GM18951 (cell line): ENCODE measurements at regions of chr3 and their contacts with region 1.

Region 1: GRCh38 chr3:53072653-53073552 is 27.0 kb upstream of the SFMBT1 start:
- POLR2A ChIP-seq: peak; percentile 38

Region 2: GRCh38 chr3:52171514-52172261 is 901.2 kb before region 1 on chr3:
- in situ Hi-C with region 1: no loop called
- POLR2A ChIP-seq: no peak

Region 3: DNA sequence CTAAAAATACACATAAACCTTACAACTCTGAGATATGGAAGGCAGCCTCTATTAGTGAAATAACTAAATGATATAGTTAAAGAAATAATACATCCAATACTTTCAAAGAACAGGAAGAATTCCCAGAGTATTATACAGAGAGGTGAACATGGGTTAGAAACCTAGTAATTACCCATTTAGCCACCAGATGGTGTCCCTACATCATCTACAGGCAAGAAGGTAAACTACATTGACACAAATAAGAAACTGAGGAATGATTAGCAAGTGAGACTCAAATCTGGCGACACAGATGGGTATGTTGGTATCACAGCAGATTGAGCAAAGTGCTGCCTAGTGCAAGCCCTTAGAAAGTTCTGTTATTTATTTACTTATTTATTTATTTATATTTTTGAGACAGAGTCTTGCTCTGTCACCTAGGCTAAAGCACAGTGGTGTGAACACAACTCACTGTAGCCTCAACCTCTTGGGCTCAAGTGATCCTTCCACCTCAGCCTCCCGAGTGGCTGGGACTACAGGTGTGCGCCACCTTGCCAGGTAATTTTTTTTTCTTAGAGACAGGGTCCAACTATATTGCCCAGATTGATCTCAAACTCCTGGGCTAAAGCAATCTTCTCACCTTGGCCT is 330.4 kb before region 1 on chr3:
- in situ Hi-C with region 1: loop called (anchors 25 kb)
- POLR2A ChIP-seq: no peak

Region 4: DNA sequence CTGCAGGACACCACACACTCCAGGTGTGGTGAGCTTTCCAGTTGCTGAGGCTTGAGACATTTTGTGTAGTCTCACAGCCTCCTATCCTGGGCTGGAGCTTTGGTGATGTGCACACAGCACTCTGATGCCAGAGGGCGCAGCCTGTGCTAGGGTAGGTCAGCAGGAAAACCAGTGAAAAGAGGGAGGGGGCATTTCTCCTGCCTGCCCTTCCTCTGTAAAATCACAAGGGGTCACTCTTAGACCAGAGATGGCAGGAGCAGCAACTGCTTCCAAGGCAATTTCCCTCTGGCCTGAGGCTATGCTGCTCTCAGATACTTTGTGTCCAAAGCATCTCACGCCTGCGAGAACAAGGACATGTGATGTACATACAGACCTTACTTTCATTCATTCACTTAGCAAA is 221.6 kb before region 1 on chr3:
- in situ Hi-C with region 1: loop called (anchors 5 kb)
- POLR2A ChIP-seq: no peak

Region 5: DNA sequence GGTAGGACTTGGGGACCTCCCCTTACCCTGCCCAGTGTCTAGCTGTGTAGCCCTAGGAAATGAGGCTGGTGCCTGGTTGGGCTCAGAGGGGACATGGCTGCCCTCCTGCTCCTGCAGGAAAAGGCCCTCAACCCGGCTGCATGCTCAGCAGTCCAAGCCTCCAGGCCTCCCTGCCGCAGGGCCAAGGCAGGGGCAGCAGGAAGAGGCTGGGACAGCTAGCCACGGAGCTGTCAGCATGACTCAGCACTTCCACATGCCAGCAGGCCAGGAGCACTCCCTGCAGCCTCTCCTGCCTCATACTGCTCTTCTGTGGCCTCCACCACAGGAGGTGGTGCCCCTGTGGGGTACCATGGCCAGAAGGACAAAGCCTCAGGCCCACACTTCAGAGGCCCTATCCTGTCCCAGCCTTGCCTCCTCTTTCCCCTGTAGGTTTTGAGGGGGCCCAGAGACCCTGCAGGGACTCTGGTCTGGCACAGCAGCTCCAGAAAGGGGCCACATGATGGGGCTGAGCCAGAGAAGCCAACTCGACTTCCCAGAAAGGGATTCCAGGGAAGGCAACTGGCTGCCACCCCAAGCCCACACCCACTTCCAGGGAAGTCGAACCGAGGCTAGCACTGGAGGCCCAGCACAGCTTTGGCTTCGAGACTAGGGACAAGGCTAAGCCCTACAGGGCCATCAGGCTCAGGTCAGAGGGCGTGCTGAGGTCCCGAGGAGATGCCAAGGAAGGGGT is 163.4 kb after region 1 on chr3:
- in situ Hi-C with region 1: no loop called
- POLR2A ChIP-seq: no peak

Region 6: DNA sequence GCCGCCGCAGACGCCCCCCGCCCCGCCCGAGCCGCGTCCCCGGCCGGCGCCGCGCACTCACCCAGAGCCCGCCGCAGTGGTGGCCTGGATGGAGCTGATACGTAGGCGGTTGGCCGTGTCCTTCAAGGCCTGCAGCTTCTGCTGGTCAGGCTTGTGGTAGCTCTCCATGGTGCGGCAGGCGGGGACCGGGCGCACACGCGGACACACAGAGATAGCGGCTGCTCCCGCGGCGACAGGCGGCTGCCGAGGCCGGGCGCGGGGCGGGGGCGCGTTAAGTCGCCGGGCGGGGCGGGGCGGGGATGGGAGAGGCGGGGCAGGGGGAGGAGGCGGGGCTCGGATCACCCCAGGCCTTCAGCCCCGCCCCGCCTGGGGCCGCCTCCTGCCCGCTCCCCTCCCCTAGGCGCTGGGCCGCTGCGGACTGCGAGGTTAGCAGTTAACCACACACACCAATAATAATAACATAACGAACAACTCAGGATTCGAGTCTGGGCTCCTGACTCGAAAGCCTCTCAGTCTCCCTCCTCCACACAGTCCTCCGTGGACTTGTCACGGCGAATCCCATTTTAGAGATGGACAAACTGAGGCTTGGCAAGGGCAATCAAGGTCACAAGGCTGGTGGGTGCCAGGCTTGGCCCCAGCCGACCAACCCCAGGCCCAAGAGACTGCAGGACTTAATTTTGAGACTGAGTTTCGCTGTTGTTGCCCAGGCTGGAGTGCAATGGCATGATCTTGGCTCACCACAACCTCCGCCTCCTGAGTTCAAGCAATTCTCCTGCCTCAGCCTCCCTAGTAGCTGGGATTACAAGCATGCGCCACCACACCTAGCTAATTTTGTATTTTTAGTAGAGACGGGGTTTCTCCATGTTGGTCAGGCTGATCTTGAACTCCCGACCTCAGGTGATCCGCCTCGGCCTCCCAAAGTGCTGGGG is 183.1 kb after region 1 on chr3 and contains the start of gene TKT:
- in situ Hi-C with region 1: no loop called
- POLR2A ChIP-seq: peak; percentile 94